SK-N-SH (cell line): ENCODE measurements at regions of chr11 and their contacts with region 1.

Region 1: DNA sequence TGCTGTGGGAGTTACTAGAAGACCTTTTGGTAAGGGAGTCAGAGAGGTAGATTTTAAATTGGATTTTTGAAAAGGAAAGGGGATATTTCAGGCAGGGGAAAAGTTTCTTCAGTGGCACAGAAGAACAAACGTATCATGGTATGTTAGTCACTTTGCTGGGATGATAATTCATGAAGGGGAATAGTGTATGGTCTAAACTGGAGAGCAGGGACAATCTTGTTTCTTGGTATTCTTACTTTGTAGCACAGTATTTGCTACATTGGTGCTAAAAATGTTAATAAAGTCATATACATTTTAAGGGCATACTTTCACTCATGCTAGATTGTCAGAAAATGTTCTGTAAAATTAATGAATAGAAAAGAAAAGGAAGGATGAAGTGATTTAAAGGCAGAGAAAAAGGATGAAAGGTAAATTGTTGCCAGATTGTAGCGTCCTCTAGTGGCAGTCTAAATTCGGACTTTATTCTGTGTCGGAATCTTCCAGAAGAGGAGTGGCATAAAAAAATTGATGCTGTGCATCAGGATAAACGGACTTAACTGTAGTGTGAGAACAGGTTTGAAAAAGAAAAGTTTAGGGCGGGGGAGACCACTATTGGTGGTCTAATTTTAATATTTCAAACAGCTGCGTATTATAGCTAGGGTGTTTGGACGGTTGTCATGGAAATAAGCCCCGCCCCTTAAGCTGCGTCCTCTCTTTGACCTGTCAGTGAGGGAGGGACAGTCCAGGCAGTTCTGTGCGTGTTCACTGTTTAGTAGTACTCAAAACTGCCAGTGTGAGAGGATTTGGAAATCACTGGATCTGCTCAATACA is at the start of gene BCO2:
- DNase-seq: peak; percentile 79
- H3K4me3 ChIP-seq: peak within 1 kb of the TSS; percentile 45 to 50
- H3K27ac ChIP-seq: peak within 1 kb of the TSS; percentile 17 to 72; a peak in 3 of 4 replicates
- H3K4me1 ChIP-seq: peaks cover 6 to 10% of the 10 kb centered on the region in 2 experiments; a peak in 3 of 4 replicates
- H3K27me3 ChIP-seq: no peaks in the 10 kb centered on the region
- CTCF ChIP-seq: peak; percentile 99
- EP300 ChIP-seq: 0 out of 4 replicates have a peak, but pooled peaks of 1 of the 2 experiments have one; percentile 20
- RAD21 ChIP-seq: peak; percentile 76
- polyA plus RNA-seq, gene BCO2: 0.87 and 1.2 TPM in 2 replicates

Region 2: GRCh38 chr11:111730871-111731591 is 444.0 kb before region 1 on chr11:
- CTCF ChIA-PET with region 1: no interaction called
- POLR2A ChIA-PET with region 1: no interaction called
- DNase-seq: peak; percentile 49
- H3K4me3 ChIP-seq: no peak overlapping the region
- H3K27ac ChIP-seq: no peak overlapping the region; a peak in 1 of 4 replicates
- H3K4me1 ChIP-seq: peaks cover 35 to 62% of the 10 kb centered on the region in 2 experiments
- H3K27me3 ChIP-seq: no peaks in the 10 kb centered on the region
- CTCF ChIP-seq: no peak
- EP300 ChIP-seq: no peak
- RAD21 ChIP-seq: no peak

Region 3: DNA sequence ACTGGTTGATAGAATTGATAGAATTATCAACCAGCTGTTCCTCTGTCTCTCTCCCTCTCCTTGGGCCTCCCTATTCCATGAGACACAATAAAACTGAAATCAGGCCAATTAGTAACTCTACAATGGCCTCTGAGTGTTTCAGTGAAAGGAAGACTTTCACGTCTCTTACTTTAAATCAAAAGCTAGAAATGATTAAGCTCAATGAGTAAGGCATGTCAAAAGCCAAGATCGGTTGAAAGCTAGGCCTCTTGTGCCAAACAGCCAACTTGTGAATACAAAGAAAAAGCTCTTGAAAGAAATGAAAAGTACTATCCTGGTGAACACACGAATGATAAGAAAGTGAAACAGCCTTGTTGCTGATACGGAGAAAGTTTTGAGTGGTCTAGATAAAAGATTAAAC is 117.8 kb before region 1 on chr11:
- CTCF ChIA-PET with region 1: no interaction called
- POLR2A ChIA-PET with region 1: no interaction called
- DNase-seq: no peak
- H3K4me3 ChIP-seq: no peak overlapping the region
- H3K27ac ChIP-seq: no peak overlapping the region
- H3K4me1 ChIP-seq: no peaks in the 10 kb centered on the region
- H3K27me3 ChIP-seq: no peaks in the 10 kb centered on the region
- CTCF ChIP-seq: no peak
- EP300 ChIP-seq: no peak
- RAD21 ChIP-seq: no peak

Region 4: GRCh38 chr11:112150517-112150916 is 24.5 kb before region 1 on chr11:
- CTCF ChIA-PET with region 1: interaction called, 10 read pairs
- POLR2A ChIA-PET with region 1: no interaction called
- DNase-seq: no peak
- H3K4me3 ChIP-seq: no peak overlapping the region
- H3K27ac ChIP-seq: no peak overlapping the region
- H3K4me1 ChIP-seq: no peaks in the 10 kb centered on the region
- H3K27me3 ChIP-seq: no peaks in the 10 kb centered on the region
- CTCF ChIP-seq: no peak
- EP300 ChIP-seq: no peak
- RAD21 ChIP-seq: no peak

Region 5: GRCh38 chr11:112260490-112260889 is 85.5 kb after region 1 on chr11 and contains the start of gene PLET1:
- CTCF ChIA-PET with region 1: no interaction called
- POLR2A ChIA-PET with region 1: no interaction called
- DNase-seq: no peak
- H3K4me3 ChIP-seq: no peak within 1 kb of the TSS; a peak in 1 of 4 replicates
- H3K27ac ChIP-seq: no peak within 1 kb of the TSS
- H3K4me1 ChIP-seq: peaks cover 0 to 10% of the 10 kb centered on the region in 2 experiments; a peak in 2 of 4 replicates
- H3K27me3 ChIP-seq: no peaks in the 10 kb centered on the region
- CTCF ChIP-seq: no peak
- EP300 ChIP-seq: no peak
- RAD21 ChIP-seq: no peak
- polyA plus RNA-seq, gene PLET1: not detected in 2 replicates